AG04449 (cell line): ENCODE measurements at regions of chr2 and their contacts with region 1.

Region 1: DNA sequence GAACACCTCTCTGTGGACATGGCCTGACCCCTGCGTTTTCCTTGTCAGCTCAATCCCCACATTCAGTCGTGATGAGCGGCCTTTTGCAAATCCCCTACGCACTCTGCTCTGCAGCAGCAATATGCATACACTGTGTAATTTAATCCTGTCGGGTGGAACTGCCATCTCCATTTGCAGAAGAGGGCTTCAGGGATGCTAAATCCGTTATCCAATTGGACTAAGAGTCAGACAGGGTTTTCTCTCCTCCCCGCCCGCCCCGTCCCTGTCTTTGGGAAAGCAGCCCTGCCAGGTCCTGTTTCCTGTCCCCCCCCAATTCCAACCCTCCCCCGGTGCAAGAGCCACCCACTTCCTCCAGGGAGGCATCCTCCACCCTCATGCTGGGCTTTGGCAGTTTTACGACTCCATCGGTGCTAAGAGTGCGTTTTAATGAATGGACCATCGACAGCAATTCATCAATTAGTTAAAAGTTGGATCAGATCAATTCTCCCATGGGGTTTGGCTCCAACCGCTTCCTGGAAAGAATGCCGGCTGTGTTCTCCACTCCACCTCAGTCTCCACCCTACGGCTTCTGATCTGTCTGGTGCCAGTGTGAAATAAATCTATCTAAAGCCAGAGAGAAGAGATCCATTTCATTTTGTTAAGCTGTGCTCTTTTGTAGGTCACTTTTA is 53.5 kb upstream of the ASAP2 start:
- DNase-seq: no peak
- H3K4me3 ChIP-seq: no peak overlapping the region
- CTCF ChIP-seq: no peak

Region 2: DNA sequence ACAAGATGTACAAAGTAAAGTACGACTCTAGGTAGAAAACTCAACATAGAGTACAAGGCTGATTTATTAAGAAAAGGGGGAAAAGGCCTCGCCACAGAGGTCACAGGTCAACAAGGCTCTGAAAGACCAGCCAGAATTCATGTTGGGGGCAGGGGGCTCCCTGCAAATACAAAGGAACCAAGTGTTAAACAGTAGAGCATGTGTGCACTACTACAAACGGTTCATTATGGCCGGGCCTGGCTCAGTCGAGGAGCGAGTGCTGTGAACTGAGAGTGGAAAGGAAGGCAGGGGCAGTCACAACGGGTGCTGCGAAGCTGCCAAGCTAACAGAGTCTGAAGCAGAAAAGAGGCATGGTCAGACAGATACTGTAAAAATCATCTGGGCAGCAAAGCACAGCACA is 226.8 kb before region 1 on chr2:
- CTCF ChIA-PET with region 1: no interaction called
- POLR2A ChIA-PET with region 1: no interaction called
- DNase-seq: no peak
- H3K4me3 ChIP-seq: no peak overlapping the region
- CTCF ChIP-seq: no peak

Region 3: GRCh38 chr2:9373077-9373875 is 220.2 kb after region 1 on chr2:
- CTCF ChIA-PET with region 1: interaction called, 11 read pairs
- POLR2A ChIA-PET with region 1: no interaction called
- DNase-seq: no peak
- H3K4me3 ChIP-seq: no peak overlapping the region
- CTCF ChIP-seq: no peak

Region 4: DNA sequence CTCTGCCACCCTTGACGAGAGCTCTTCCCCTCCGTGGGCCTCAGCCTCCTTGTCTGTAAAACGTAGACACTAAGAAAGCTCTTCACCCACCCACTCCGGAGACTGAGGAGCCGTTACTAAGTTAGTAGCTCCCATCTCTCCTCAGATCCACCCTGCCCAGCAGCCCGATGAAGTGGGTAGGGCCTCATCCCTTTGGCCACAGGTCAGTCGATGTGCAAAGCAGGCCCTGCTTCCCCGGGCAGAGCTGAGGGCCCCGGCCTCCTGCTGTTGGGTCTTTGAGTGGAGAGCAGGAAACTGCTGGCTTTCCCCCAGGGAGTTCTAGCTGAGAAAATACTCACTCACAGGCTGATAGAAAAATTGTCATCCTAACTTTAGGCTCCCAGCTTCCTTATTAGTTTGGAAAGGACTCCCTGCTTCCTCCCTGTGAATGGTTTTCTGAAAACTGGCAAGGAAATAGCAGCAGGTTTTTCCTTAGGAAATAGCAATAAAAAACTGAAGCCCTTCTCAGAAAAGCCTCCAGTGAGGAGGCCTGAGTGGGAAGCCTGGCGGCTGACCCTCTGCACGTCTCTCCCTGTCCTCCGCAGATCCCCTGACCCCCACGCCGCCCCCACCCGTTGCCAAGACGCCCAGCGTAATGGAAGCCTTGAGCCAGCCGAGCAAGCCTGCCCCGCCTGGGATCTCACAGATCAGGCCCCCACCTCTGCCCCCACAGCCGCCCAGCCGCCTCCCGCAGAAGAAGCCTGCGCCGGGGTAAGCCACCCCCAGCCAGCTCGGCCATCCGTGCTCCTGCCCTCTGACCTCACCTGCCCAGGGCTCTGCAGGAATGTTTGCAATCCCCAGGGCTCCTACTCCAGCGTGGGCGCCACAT is 240.0 kb after region 1 on chr2:
- CTCF ChIA-PET with region 1: no interaction called
- POLR2A ChIA-PET with region 1: no interaction called
- DNase-seq: no peak
- H3K4me3 ChIP-seq: no peak overlapping the region
- CTCF ChIP-seq: no peak